PC-3 (cell line): ENCODE measurements at regions of chr11 and their contacts with region 1.

Region 1: DNA sequence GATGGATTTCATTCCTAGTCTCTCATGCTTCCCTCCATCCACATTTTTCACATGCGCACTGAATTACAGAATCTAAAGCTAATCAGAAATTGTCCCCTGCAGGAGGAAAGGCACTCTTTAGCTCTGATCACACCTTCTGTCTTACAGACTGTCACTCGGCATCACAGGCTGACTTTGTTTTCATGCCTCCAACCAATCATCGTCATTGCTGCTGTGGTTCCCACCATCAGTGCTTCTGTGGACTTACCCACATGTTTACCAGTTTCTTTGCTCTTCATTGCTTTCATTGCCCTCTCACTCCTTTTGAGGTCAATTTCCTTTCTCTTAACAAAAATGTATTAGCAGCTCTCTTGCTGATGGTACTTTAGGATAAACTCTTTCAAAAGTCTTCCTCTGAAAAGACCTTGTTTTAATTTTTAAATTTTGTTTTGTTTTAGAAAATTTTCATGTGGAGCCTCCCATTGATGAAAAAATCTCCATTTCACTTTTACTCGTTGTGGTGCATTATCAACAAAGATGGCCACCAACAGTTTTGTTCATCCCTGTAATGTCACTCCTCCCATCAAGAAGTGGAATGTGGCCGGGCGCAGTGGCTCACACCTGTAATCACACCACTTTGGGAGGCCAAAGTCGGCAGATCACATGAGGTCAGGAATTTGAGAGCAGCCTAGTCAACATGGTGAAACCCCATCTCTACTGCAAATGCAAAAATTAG is 20.2 kb upstream of the TREH start:
- DNase-seq: no peak
- ATAC-seq: no peak
- H3K4me3 ChIP-seq: no peak overlapping the region
- H3K27ac ChIP-seq: no peak overlapping the region
- H3K4me1 ChIP-seq: no peaks in the 10 kb centered on the region
- H3K27me3 ChIP-seq: no peaks in the 10 kb centered on the region
- CTCF ChIP-seq: no peak

Region 2: GRCh38 chr11:118715245-118715831 is 15.7 kb after region 1 on chr11:
- CTCF ChIA-PET with region 1: no interaction called
- POLR2A ChIA-PET with region 1: no interaction called
- intact Hi-C with region 1: no loop called
- DNase-seq: no peak
- ATAC-seq: no peak
- H3K4me3 ChIP-seq: no peak overlapping the region
- H3K27ac ChIP-seq: no peak overlapping the region
- H3K4me1 ChIP-seq: no peaks in the 10 kb centered on the region
- H3K27me3 ChIP-seq: 0 out of 2 replicates have a peak, but pooled peaks cover 5% of the 10 kb centered on the region
- CTCF ChIP-seq: no peak

Region 3: GRCh38 chr11:118845369-118845768 is 145.7 kb after region 1 on chr11:
- CTCF ChIA-PET with region 1: no interaction called
- POLR2A ChIA-PET with region 1: interaction called, 12 read pairs
- intact Hi-C with region 1: no loop called
- DNase-seq: peak; percentile 76
- ATAC-seq: peak; percentile 89
- H3K4me3 ChIP-seq: no peak overlapping the region
- H3K27ac ChIP-seq: no peak overlapping the region
- H3K4me1 ChIP-seq: peaks cover 7% of the 10 kb centered on the region
- H3K27me3 ChIP-seq: no peaks in the 10 kb centered on the region
- CTCF ChIP-seq: no peak